ENCODE measurements at regions of chr17 and their contacts with region 1.

Region 1: GRCh38 chr17:39643271-39643670 is 6.3 kb downstream of the STARD3 start:
- DNase-seq: no peak
- ATAC-seq: no peak
- H3K4me3 ChIP-seq: no peak overlapping the region
- H3K4me3 Mint-ChIP-seq: no peak overlapping the region
- H3K27ac ChIP-seq: no peak overlapping the region
- H3K27ac Mint-ChIP-seq: no peak overlapping the region
- H3K4me1 ChIP-seq: peaks cover 47% of the 10 kb centered on the region
- H3K4me1 Mint-ChIP-seq: peaks cover 71% of the 10 kb centered on the region
- H3K27me3 ChIP-seq: no peaks in the 10 kb centered on the region
- H3K27me3 Mint-ChIP-seq: no peaks in the 10 kb centered on the region
- CTCF ChIP-seq: no peak

Region 2: GRCh38 chr17:39186481-39187002 is 456.7 kb before region 1 on chr17:
- CTCF ChIA-PET with region 1: no interaction called
- POLR2A ChIA-PET with region 1: no interaction called
- intact Hi-C with region 1: no loop called
- DNase-seq: no peak
- ATAC-seq: no peak
- H3K4me3 ChIP-seq: no peak overlapping the region
- H3K4me3 Mint-ChIP-seq: no peak overlapping the region
- H3K27ac ChIP-seq: no peak overlapping the region
- H3K27ac Mint-ChIP-seq: no peak overlapping the region
- H3K4me1 ChIP-seq: no peaks in the 10 kb centered on the region
- H3K4me1 Mint-ChIP-seq: no peaks in the 10 kb centered on the region
- H3K27me3 ChIP-seq: no peaks in the 10 kb centered on the region
- H3K27me3 Mint-ChIP-seq: no peaks in the 10 kb centered on the region
- CTCF ChIP-seq: no peak

Region 3: GRCh38 chr17:39563476-39563875 is 79.8 kb before region 1 on chr17:
- CTCF ChIA-PET with region 1: no interaction called
- POLR2A ChIA-PET with region 1: no interaction called
- intact Hi-C with region 1: no loop called
- DNase-seq: no peak
- ATAC-seq: no peak
- H3K4me3 ChIP-seq: no peak overlapping the region
- H3K4me3 Mint-ChIP-seq: no peak overlapping the region
- H3K27ac ChIP-seq: no peak overlapping the region
- H3K27ac Mint-ChIP-seq: no peak overlapping the region
- H3K4me1 ChIP-seq: no peaks in the 10 kb centered on the region
- H3K4me1 Mint-ChIP-seq: no peaks in the 10 kb centered on the region
- H3K27me3 ChIP-seq: no peaks in the 10 kb centered on the region
- H3K27me3 Mint-ChIP-seq: no peaks in the 10 kb centered on the region
- CTCF ChIP-seq: no peak

Region 4: GRCh38 chr17:39695089-39695474 is 51.8 kb after region 1 on chr17:
- CTCF ChIA-PET with region 1: no interaction called
- POLR2A ChIA-PET with region 1: no interaction called
- intact Hi-C with region 1: no loop called
- DNase-seq: no peak
- ATAC-seq: no peak
- H3K4me3 ChIP-seq: no peak overlapping the region
- H3K4me3 Mint-ChIP-seq: no peak overlapping the region
- H3K27ac ChIP-seq: no peak overlapping the region
- H3K27ac Mint-ChIP-seq: no peak overlapping the region
- H3K4me1 ChIP-seq: peaks cover 6% of the 10 kb centered on the region
- H3K4me1 Mint-ChIP-seq: peaks cover 4% of the 10 kb centered on the region
- H3K27me3 ChIP-seq: peaks cover 0 to 10% of the 10 kb centered on the region in 2 experiments
- H3K27me3 Mint-ChIP-seq: peaks cover 13% of the 10 kb centered on the region
- CTCF ChIP-seq: no peak

Region 5: DNA sequence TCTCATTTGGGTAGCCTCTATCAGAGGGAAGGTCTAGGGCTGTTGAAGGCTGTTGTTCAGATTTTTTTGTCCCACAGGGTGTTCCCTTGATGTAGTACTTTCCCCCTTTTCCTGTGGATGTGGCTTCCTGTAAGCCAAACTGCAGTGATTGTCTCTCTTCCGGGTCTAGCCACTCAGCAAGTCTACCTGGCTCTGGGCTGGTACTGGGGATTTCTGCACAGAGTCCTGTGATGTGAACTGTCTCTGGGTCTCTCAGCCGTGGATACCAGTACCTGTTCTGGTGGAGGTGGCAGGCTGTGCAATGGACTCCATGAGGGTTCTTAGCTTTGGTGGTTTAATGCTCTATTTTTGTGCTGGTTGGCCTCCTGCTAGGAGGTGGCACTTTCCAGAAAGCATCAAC is 945.3 kb after region 1 on chr17:
- CTCF ChIA-PET with region 1: no interaction called
- POLR2A ChIA-PET with region 1: no interaction called
- intact Hi-C with region 1: loop called in 1 of 2 experiments (anchors 5 kb)
- DNase-seq: peak in 2 of 9 experiments; percentile 48 to 68
- ATAC-seq: no peak
- H3K4me3 ChIP-seq: no peak overlapping the region
- H3K4me3 Mint-ChIP-seq: peak overlapping the region; percentile 40
- H3K27ac ChIP-seq: peak overlapping the region in 1 of 2 experiments; percentile 22
- H3K27ac Mint-ChIP-seq: peak overlapping the region; percentile 89
- H3K4me1 ChIP-seq: peaks cover 63% of the 10 kb centered on the region
- H3K4me1 Mint-ChIP-seq: peaks cover 83% of the 10 kb centered on the region
- H3K27me3 ChIP-seq: no peaks in the 10 kb centered on the region
- H3K27me3 Mint-ChIP-seq: no peaks in the 10 kb centered on the region
- CTCF ChIP-seq: no peak